ENCODE measurements at regions of chr4 and their contacts with region 1.

Region 1: GRCh38 chr4:3880615-3881120 is 114.5 kb downstream of the ADRA2C start:
- DNase-seq: peak; percentile 35
- ATAC-seq: peak; percentile 99
- H3K4me3 ChIP-seq: no peak overlapping the region
- H3K27ac ChIP-seq: no peak overlapping the region
- H3K4me1 ChIP-seq: 0 out of 4 replicates have a peak, but pooled peaks cover 0 to 5% of the 10 kb centered on the region in 2 experiments
- H3K27me3 ChIP-seq: 0 out of 2 replicates have a peak, but pooled peaks cover 4% of the 10 kb centered on the region
- CTCF ChIP-seq: peak; percentile 77 to 82 (median 81); a peak in 5 of 6 replicates
- POLR2A ChIP-seq: no peak
- RAD21 ChIP-seq: peak; percentile 93

Region 2: GRCh38 chr4:3480528-3481112 is 400.0 kb before region 1 on chr4:
- CTCF ChIA-PET with region 1: interaction called, 11 read pairs
- POLR2A ChIA-PET with region 1: no interaction called
- RAD21 ChIA-PET with region 1: interaction called in 1 of 2 experiments, 3 read pairs
- intact Hi-C with region 1: no loop called
- DNase-seq: peak; percentile 45
- ATAC-seq: peak; percentile 87
- H3K4me3 ChIP-seq: no peak overlapping the region
- H3K27ac ChIP-seq: peak overlapping the region; percentile 8; the same call in 1 of the 2 replicates
- H3K4me1 ChIP-seq: peaks cover 20 to 28% of the 10 kb centered on the region in 2 experiments
- H3K27me3 ChIP-seq: no peaks in the 10 kb centered on the region
- CTCF ChIP-seq: peak; percentile 97 to 100 (median 98)
- POLR2A ChIP-seq: no peak
- RAD21 ChIP-seq: peak; percentile 87

Region 3: DNA sequence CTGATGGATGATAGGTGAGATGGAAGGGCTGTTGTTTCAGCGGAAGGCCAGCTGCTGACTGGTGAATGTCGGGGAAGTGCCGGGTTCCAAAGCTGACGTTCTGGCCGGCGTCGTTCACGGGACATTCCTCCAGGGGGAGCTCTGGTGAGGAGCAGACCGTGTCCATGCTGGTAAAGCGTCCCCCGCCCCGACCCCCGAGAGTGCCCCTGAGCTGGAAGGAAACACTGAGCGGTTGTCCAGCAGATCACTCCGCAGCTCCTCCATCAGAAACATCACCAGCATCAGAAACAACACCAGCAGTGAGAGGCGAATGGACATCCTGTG is 133.1 kb before region 1 on chr4:
- CTCF ChIA-PET with region 1: interaction called, 12 read pairs
- POLR2A ChIA-PET with region 1: no interaction called
- RAD21 ChIA-PET with region 1: interaction called, 7 to 15 read pairs
- intact Hi-C with region 1: no loop called
- DNase-seq: no peak
- ATAC-seq: no peak
- H3K4me3 ChIP-seq: no peak overlapping the region
- H3K27ac ChIP-seq: no peak overlapping the region
- H3K4me1 ChIP-seq: peaks cover 5 to 23% of the 10 kb centered on the region in 2 experiments; a peak in 3 of 4 replicates
- H3K27me3 ChIP-seq: no peaks in the 10 kb centered on the region
- CTCF ChIP-seq: peak in 2 of 3 experiments; percentile 36 to 37; a peak in 3 of 6 replicates
- POLR2A ChIP-seq: no peak
- RAD21 ChIP-seq: no peak

Region 4: DNA sequence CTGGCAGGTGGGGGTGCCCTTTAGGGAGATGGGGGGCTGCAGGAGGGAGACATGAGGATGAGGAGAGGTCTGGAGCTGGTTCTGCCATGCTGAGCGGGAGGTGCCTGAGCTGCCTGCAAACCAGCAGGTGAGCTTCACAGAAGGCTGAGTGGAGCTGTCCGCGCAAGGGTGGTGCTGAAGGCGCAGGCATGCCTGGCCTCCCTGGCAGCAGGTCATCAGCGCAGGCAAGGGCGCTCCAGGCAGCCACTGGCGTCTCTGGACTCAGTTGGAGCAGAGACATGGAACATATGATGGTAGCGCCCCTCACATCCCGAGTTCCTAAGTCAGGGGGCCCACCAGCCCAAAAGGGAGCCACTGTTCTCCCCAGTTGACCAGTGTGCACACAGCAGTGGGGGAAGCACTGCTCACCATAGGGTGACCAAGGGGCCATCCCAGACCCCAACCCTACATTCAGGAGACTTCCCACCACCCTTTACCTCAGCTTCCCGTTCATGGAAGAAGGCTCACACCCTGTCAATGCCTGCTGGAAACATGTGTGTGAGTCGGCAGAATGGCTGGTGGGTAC is 88.6 kb before region 1 on chr4:
- CTCF ChIA-PET with region 1: interaction called, 17 read pairs
- POLR2A ChIA-PET with region 1: no interaction called
- RAD21 ChIA-PET with region 1: interaction called in 1 of 2 experiments, 3 read pairs
- intact Hi-C with region 1: loop called (anchors 2 kb)
- DNase-seq: no peak
- ATAC-seq: peak; percentile 70
- H3K4me3 ChIP-seq: no peak overlapping the region
- H3K27ac ChIP-seq: no peak overlapping the region
- H3K4me1 ChIP-seq: no peaks in the 10 kb centered on the region
- H3K27me3 ChIP-seq: no peaks in the 10 kb centered on the region
- CTCF ChIP-seq: no peak
- POLR2A ChIP-seq: no peak
- RAD21 ChIP-seq: no peak